ENCODE measurements at regions of chr1 and their contacts with region 1.

Region 1: GRCh38 chr1:241531195-241532161 is 700 bp upstream of the KMO start:
- DNase-seq: peak; percentile 78
- ATAC-seq: peak; percentile 93
- H3K4me3 ChIP-seq: peak overlapping the region; percentile 42
- H3K27ac ChIP-seq: peak overlapping the region; percentile 9; the same call in 1 of the 2 replicates
- H3K4me1 ChIP-seq: no peaks in the 10 kb centered on the region
- H3K27me3 ChIP-seq: peaks cover 9% of the 10 kb centered on the region
- CTCF ChIP-seq: peak; percentile 75
- POLR2A ChIP-seq: no peak
- RAD21 ChIP-seq: peak; percentile 80

Region 2: DNA sequence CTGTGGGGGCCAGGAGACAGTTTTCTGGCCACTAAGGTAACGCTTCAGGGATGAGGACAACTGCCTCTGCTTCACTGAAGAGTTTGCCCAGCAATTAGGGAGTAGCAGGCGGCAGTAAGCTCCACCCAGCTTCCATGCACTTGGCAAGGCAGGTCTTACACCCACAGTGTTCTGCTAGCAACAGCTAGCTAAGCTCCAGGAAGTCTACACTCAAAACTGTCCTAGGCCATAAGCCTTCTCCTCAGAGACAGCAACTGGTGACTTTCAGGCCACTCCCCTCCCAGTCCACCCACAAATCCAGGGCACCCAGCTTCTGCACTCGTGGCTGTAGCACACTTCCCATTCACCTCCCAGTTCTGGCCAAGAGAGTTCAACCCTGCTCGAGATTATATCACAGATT is 47.9 kb after region 1 on chr1:
- CTCF ChIA-PET with region 1: no interaction called
- POLR2A ChIA-PET with region 1: no interaction called
- dilution Hi-C with region 1: no loop called
- in situ Hi-C with region 1: no loop called
- intact Hi-C with region 1: loop called (anchors 5 kb)
- DNase-seq: no peak
- ATAC-seq: no peak
- H3K4me3 ChIP-seq: no peak overlapping the region
- H3K27ac ChIP-seq: no peak overlapping the region
- H3K4me1 ChIP-seq: no peaks in the 10 kb centered on the region
- H3K27me3 ChIP-seq: no peaks in the 10 kb centered on the region
- CTCF ChIP-seq: no peak
- POLR2A ChIP-seq: no peak
- RAD21 ChIP-seq: no peak

Region 3: GRCh38 chr1:241627453-241628259 is 96.2 kb after region 1 on chr1:
- CTCF ChIA-PET with region 1: no interaction called
- POLR2A ChIA-PET with region 1: no interaction called
- dilution Hi-C with region 1: no loop called
- in situ Hi-C with region 1: no loop called
- intact Hi-C with region 1: loop called (anchors 1 kb)
- DNase-seq: peak; percentile 86
- ATAC-seq: peak; percentile 72
- H3K4me3 ChIP-seq: no peak overlapping the region
- H3K27ac ChIP-seq: no peak overlapping the region
- H3K4me1 ChIP-seq: no peaks in the 10 kb centered on the region; the same call in 1 of the 2 replicates
- H3K27me3 ChIP-seq: no peaks in the 10 kb centered on the region
- CTCF ChIP-seq: peak; percentile 72
- POLR2A ChIP-seq: no peak
- RAD21 ChIP-seq: peak; percentile 77

Region 4: GRCh38 chr1:241895013-241895412 is 363.5 kb after region 1 on chr1:
- CTCF ChIA-PET with region 1: no interaction called
- POLR2A ChIA-PET with region 1: no interaction called
- dilution Hi-C with region 1: no loop called
- in situ Hi-C with region 1: no loop called
- intact Hi-C with region 1: loop called (anchors 1 kb)
- DNase-seq: no peak
- ATAC-seq: no peak
- H3K4me3 ChIP-seq: no peak overlapping the region
- H3K27ac ChIP-seq: no peak overlapping the region
- H3K4me1 ChIP-seq: no peaks in the 10 kb centered on the region
- H3K27me3 ChIP-seq: no peaks in the 10 kb centered on the region
- CTCF ChIP-seq: no peak
- POLR2A ChIP-seq: no peak
- RAD21 ChIP-seq: no peak

Region 5: DNA sequence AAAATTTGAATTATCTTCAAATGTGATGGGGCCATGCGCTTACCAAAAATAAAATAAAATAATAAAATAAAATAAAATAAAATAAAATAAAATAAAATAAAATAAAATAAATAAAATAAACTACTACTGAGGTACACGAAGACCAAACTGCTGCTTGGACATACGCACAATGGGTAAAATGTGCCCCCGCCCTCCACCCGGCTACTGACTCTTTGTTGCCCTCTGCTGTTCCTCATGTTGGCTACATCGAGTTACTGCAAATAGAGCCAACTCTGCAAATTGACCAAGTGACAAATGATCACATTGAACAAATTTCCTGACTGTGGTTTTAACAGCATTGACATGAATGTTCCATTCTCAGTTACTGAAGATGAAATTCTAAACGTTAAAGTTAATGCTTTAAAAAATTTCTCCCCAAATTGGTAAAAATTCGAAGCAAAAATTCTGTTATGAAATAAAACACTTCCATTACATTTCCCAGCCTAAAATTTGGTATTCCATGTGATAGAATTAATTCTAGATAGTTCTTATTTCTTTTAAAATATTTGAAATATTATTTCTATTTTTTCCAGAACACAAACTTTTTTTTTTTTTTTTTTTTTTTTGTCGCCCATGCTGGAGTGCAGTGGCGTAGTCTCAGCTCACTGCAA is 486.2 kb after region 1 on chr1:
- CTCF ChIA-PET with region 1: no interaction called
- POLR2A ChIA-PET with region 1: no interaction called
- dilution Hi-C with region 1: no loop called
- in situ Hi-C with region 1: no loop called
- intact Hi-C with region 1: loop called (anchors 5 kb)
- DNase-seq: peak; percentile 21
- ATAC-seq: peak; percentile 59; the same call in 1 of the 2 replicates
- H3K4me3 ChIP-seq: no peak overlapping the region
- H3K27ac ChIP-seq: no peak overlapping the region
- H3K4me1 ChIP-seq: no peaks in the 10 kb centered on the region
- H3K27me3 ChIP-seq: no peaks in the 10 kb centered on the region
- CTCF ChIP-seq: peak; percentile 38; the same call in 1 of the 2 replicates
- POLR2A ChIP-seq: no peak
- RAD21 ChIP-seq: peak; percentile 32

Region 6: GRCh38 chr1:242089911-242090310 is 558.4 kb after region 1 on chr1:
- CTCF ChIA-PET with region 1: no interaction called
- POLR2A ChIA-PET with region 1: no interaction called
- dilution Hi-C with region 1: no loop called
- in situ Hi-C with region 1: no loop called
- intact Hi-C with region 1: no loop called
- DNase-seq: no peak
- ATAC-seq: no peak
- H3K4me3 ChIP-seq: no peak overlapping the region
- H3K27ac ChIP-seq: no peak overlapping the region
- H3K4me1 ChIP-seq: no peaks in the 10 kb centered on the region
- H3K27me3 ChIP-seq: no peaks in the 10 kb centered on the region
- CTCF ChIP-seq: no peak
- POLR2A ChIP-seq: no peak
- RAD21 ChIP-seq: no peak